ENCODE measurements at regions of chr5 and their contacts with region 1.

Region 1: DNA sequence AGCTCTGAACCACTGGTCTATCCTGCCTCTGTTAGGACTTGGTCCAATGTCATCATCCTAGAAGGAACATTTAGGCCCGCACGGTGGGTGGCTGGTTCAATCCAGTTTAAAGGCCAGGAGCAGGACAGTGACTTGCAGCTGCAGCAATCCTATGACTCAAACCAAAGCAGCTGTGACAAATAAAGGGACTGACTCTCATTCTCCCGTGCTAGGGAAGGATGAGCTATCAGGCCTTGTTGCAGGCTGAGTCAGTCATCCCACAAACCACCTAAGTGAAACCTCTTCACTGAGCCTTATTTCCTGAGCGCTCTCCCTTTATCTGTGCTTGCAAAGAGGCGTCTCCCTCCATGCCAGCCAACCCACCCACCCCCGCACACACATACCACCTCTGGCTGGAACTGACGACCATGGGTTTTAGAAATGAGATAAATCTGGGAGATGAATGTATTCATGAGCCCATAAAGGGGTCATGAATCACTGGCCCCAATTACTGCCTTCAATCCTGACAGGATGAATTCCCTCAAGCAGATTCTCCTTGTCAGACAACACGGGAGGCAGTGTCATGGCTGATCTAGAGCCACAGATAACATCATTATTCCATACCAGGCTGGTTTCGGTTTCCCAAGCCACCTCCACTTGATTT is 93.4 kb downstream of the KCNIP1 start:
- DNase-seq: no peak

Region 2: DNA sequence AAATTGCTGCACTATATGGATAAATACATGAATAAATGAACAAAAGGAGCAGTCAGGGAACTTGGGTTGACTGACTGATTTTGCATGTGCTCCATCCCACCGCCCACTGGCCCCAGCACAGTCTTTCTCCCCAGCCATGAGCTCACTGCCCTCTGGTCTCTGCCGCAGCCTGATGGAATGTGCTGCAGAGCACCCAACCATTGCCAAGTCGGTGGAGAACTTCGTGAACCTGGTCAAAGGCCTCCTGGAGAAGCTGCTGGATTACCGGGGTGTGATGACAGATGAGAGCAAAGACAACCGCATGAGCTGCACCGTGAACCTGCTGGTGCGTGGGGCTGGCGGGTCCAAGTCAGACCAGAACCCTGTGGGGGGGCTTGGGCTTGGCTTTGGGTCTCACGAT is 563.0 kb before region 1 on chr5:
- intact Hi-C with region 1: loop called in 1 of 2 experiments (anchors 2 kb)
- DNase-seq: no peak

Region 3: GRCh38 chr5:170737591-170737990 is 140.4 kb after region 1 on chr5:
- intact Hi-C with region 1: no loop called
- DNase-seq: no peak